Transverse colon (tissue), 4 donors: ENCODE measurements at regions of chr7 and their contacts with region 1.

Region 1: DNA sequence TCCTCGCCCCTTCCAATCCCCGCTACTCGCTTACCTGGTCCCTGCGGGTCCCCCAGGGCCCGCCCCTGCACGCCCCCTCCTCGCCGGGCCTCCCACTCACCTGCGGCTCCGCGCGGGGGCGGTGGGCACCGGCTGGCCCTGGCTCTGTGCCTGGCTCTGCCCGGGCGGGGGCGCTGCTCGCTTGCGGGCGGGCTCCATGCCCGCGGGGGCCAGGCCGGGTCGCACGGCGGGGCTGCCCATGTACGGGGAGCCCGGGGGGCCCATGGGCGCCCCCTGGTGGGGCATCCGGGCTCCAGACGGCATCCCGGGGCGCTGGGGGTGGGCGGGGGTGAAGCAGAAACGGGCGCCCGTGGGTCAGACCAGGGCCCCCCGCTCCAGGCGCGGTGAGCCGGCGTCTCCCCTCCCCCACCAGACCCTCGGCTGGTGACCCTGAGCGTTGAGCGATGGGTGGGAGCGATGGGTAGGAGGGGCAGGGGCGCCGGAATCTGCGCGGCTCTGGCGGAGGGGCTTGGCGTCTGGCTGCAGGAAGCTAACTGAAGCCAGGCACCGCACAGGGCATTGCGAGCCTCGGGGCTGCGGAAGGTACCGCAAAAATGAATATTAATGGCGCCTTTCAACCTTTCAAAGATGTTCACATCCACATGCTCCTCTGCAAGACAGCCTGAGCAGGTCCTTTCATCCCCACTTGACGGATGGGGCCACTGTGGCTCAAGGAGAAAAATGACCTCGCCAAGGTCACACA is 3.0 kb downstream of the SMARCD3 start:
- DNase-seq: peak; percentile 47
- H3K4me3 ChIP-seq: peak overlapping the region; percentile 15 to 40 (median 24)
- H3K27ac ChIP-seq: peak overlapping the region in 3 of 4 donors; percentile 30 to 96 (median 91)
- H3K4me1 ChIP-seq: peaks cover 21 to 64% (median 53%) of the 10 kb centered on the region in 4 donors
- H3K27me3 ChIP-seq: peaks cover 61% of the 10 kb centered on the region
- CTCF ChIP-seq: peak in 4 of 5 experiments; percentile 23 to 81 (median 67)
- EP300 ChIP-seq: no peak
- POLR2A ChIP-seq: no peak

Region 2: GRCh38 chr7:151282111-151282510 is 36.6 kb after region 1 on chr7:
- in situ Hi-C with region 1: no loop called
- intact Hi-C with region 1: loop called (anchors 1 kb)
- DNase-seq: no peak
- H3K4me3 ChIP-seq: no peak overlapping the region
- H3K27ac ChIP-seq: no peak overlapping the region
- H3K4me1 ChIP-seq: peaks cover 0 to 6% (median 5%) of the 10 kb centered on the region in 4 donors
- H3K27me3 ChIP-seq: peaks cover 22% of the 10 kb centered on the region
- CTCF ChIP-seq: no peak
- EP300 ChIP-seq: no peak
- POLR2A ChIP-seq: no peak

Region 3: GRCh38 chr7:151705636-151706276 is 460.2 kb after region 1 on chr7:
- in situ Hi-C with region 1: no loop called
- intact Hi-C with region 1: no loop called
- DNase-seq: peak; percentile 32
- H3K4me3 ChIP-seq: no peak overlapping the region
- H3K27ac ChIP-seq: peak overlapping the region in 2 of 4 donors; percentile 3 to 17
- H3K4me1 ChIP-seq: peaks cover 0 to 11% (median 2%) of the 10 kb centered on the region in 4 donors
- H3K27me3 ChIP-seq: no peaks in the 10 kb centered on the region
- CTCF ChIP-seq: peak; percentile 24 to 42 (median 32)
- EP300 ChIP-seq: no peak
- POLR2A ChIP-seq: no peak

Region 4: GRCh38 chr7:153152801-153153417 is 1907.4 kb after region 1 on chr7:
- in situ Hi-C with region 1: no loop called
- intact Hi-C with region 1: no loop called
- DNase-seq: no peak
- H3K4me3 ChIP-seq: no peak overlapping the region
- H3K27ac ChIP-seq: no peak overlapping the region
- H3K4me1 ChIP-seq: no peaks in the 10 kb centered on the region
- H3K27me3 ChIP-seq: no peaks in the 10 kb centered on the region
- CTCF ChIP-seq: no peak
- EP300 ChIP-seq: no peak
- POLR2A ChIP-seq: no peak